ENCODE measurements at regions of chr14 and their contacts with region 1.

Region 1: DNA sequence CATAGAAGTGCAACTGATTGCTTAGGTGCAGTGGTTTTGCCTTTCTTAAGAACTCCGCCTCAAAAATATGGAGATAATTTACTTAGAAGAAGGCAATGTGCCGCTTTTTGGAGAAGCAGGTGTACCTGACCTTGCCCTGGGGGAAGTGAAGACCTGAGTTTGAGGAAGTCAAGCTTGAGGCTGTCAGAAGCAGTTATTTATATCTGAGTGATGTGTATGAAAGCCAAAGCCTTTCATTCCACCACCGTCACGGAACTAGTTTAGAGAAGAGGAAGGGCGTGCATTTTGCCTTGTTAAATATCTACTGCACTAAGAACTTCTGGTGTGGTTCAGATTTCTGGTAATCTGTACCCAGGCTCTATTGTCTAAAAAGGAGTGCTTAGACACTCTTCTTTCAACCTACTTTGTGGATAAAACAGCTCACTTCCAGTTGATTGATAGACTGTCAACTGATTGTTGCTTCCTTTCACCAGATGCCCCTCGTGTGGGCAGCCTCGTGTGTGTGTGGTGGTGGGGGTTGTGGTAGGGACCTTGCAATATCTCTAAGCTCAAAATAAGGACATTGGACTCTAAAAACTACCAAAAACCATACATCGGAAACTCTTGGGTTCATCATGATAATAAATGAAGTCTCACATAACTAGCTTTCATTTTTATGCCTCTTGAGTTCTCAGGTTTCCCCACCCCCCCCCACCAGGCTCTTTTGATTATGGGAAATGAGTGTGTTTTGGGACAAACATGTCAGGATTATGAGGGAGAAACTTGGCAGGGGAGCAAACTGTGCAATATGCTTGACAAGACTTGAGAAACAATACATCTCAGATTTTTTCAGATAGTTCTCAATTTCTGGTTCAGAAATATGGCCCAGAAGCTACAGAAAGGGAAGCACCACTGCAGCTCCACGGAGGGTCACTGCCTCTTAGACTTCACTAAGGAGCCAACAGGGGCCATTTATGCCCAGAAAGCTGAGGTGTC is 78.6 kb downstream of the ARF6 start:
- DNase-seq: no peak
- ATAC-seq: peak; percentile 90
- H3K4me3 Mint-ChIP-seq: peak overlapping the region; percentile 44
- H3K27ac Mint-ChIP-seq: peak overlapping the region; percentile 96
- H3K4me1 Mint-ChIP-seq: peaks cover 70% of the 10 kb centered on the region
- H3K27me3 Mint-ChIP-seq: no peaks in the 10 kb centered on the region
- CTCF ChIP-seq: no peak

Region 2: DNA sequence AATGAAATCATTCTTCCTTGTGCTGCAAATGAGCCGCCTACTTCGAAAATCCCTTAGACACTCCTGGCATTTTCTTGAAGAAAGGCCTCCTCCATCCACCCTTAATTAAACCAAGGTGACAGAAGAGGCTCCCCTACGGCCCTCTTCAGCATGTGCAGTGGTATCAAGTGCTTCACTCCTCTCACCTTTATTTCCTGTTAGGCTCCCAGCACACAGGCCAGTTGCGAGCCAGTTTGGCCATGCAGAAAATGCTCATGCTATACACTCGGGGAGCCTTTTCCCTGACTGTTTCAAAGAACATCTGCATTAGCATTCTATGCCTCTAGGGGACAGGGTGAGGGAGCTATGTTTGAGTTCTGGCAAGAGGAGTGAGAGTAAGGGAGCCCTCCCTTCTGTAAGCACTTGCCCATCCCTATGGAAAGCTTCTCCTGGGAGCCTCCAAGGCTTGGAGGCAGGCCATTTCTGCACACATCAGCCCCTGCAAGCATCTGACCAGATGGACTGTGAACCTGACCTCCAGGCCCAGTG is 676.8 kb before region 1 on chr14:
- CTCF ChIA-PET with region 1: no interaction called
- POLR2A ChIA-PET with region 1: no interaction called
- intact Hi-C with region 1: no loop called
- DNase-seq: no peak
- ATAC-seq: no peak
- H3K4me3 Mint-ChIP-seq: no peak overlapping the region
- H3K27ac Mint-ChIP-seq: no peak overlapping the region
- H3K4me1 Mint-ChIP-seq: no peaks in the 10 kb centered on the region
- H3K27me3 Mint-ChIP-seq: no peaks in the 10 kb centered on the region
- CTCF ChIP-seq: no peak

Region 3: DNA sequence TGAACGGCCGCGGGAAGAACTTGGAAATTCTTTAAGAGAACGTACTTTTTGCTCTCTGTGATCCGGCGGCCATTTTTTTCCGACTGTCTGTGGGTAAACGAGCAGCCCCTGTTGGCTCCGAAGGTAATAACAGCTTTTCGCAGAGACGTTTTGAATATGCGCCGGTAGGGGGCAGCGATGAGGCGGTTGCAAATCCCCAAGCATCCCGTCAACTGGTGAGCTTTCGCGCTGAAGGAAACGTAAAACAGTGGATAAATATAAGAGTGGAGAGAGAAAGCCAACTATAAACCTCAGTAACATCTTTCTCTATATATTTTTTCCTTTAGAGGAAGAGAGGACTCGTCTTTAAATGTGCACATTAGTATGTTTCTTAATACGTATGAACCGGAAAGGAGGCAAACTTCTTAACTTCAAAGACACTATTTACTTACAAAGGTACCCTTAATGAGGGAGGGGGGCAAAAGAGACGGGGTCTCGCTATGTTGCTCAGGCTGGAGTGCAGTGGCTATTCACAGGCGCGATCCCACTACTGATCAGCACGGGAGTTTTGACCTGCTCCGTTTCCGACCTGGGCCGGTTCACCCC is 109.3 kb before region 1 on chr14:
- CTCF ChIA-PET with region 1: interaction called, 15 read pairs
- POLR2A ChIA-PET with region 1: interaction called, 233 read pairs
- intact Hi-C with region 1: loop called (anchors 1 kb)
- DNase-seq: peak; percentile 77
- ATAC-seq: peak; percentile 39
- H3K4me3 Mint-ChIP-seq: no peak overlapping the region
- H3K27ac Mint-ChIP-seq: no peak overlapping the region
- H3K4me1 Mint-ChIP-seq: peaks cover 33% of the 10 kb centered on the region
- H3K27me3 Mint-ChIP-seq: peaks cover 2% of the 10 kb centered on the region
- CTCF ChIP-seq: peak; percentile 100

Region 4: DNA sequence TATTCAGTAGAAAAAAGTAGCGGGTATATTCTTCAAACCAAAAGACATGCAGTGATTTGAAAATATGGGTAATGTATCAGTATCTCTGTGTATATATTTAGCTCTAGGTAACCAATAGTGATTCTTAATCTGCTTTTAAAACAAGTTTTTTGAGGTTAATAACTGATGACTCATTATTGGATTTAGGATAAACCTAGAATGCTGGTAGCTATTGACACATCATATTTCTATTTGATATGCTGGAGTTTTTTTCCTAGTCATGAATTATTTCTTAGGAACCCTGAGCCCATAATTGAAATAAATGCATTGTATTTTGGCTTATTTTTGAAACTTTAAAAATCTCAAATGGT is 63.0 kb before region 1 on chr14:
- CTCF ChIA-PET with region 1: no interaction called
- POLR2A ChIA-PET with region 1: interaction called, 12 read pairs
- intact Hi-C with region 1: no loop called
- DNase-seq: no peak
- ATAC-seq: no peak
- H3K4me3 Mint-ChIP-seq: no peak overlapping the region
- H3K27ac Mint-ChIP-seq: peak overlapping the region; percentile 24
- H3K4me1 Mint-ChIP-seq: peaks cover 37% of the 10 kb centered on the region
- H3K27me3 Mint-ChIP-seq: no peaks in the 10 kb centered on the region
- CTCF ChIP-seq: no peak

Region 5: GRCh38 chr14:49954171-49954631 is 17.2 kb before region 1 on chr14:
- CTCF ChIA-PET with region 1: interaction called, 5 read pairs
- POLR2A ChIA-PET with region 1: interaction called, 110 read pairs
- intact Hi-C with region 1: no loop called
- DNase-seq: no peak
- ATAC-seq: no peak
- H3K4me3 Mint-ChIP-seq: no peak overlapping the region
- H3K27ac Mint-ChIP-seq: no peak overlapping the region
- H3K4me1 Mint-ChIP-seq: peaks cover 33% of the 10 kb centered on the region
- H3K27me3 Mint-ChIP-seq: no peaks in the 10 kb centered on the region
- CTCF ChIP-seq: no peak

Region 6: DNA sequence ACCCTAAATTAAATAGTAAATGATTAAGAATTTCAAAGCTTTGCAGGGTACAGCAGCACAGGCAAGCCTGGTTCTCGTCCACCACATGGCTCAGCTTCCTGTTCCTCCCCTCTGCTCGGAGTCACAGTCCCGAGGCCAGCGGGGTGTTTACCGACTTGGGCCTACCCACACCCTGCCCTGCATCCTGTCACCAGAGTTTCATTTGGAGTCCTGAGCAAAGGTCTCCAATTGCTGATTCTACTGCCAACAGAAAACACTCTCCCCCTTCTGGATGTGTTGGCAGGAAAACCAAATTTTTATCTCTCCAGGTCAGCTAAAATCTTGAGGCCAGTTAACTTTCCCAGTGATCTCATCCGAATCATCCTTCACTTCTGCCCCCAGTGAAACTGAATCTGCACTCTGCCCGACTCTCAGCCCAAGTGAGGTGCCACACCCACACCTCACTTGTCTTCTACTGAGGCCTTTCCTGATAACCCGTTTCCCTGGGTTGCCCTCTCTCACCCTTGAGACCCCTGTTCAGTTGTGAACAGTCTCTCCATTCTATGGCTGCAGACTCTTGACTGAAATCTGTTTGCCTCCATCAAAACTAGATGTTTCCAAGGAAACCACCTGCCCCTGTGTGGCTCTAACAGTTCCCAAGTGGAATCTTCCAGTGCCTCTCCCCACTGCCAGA is 73.7 kb after region 1 on chr14:
- CTCF ChIA-PET with region 1: interaction called, 4 read pairs
- POLR2A ChIA-PET with region 1: interaction called, 10 read pairs
- intact Hi-C with region 1: no loop called
- DNase-seq: no peak
- ATAC-seq: peak; percentile 70
- H3K4me3 Mint-ChIP-seq: peak overlapping the region; percentile 2
- H3K27ac Mint-ChIP-seq: peak overlapping the region; percentile 92
- H3K4me1 Mint-ChIP-seq: peaks cover 71% of the 10 kb centered on the region
- H3K27me3 Mint-ChIP-seq: no peaks in the 10 kb centered on the region
- CTCF ChIP-seq: no peak

Region 7: DNA sequence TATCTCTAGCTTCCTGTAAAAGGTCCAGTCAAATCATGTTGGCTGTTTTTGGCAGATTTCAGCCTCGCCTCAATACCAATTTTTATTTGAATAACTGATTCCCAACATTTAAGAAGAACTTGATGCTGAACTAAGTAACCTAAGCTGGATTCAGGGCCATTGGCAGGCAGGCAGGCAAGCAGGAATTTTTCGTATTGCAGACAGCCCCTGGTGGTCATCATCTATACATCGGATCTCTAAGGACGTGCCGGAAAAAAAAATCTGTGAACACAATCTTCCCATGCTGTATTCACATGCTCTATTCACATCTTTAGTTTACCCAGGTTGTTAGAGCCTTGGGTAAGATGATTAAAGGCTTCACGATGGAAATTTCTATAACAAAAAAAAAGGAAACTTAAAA is 137.9 kb after region 1 on chr14:
- CTCF ChIA-PET with region 1: no interaction called
- POLR2A ChIA-PET with region 1: interaction called, 11 read pairs
- intact Hi-C with region 1: loop called (anchors 1 kb)
- DNase-seq: no peak
- ATAC-seq: no peak
- H3K4me3 Mint-ChIP-seq: no peak overlapping the region
- H3K27ac Mint-ChIP-seq: peak overlapping the region; percentile 20
- H3K4me1 Mint-ChIP-seq: peaks cover 46% of the 10 kb centered on the region
- H3K27me3 Mint-ChIP-seq: no peaks in the 10 kb centered on the region
- CTCF ChIP-seq: no peak